ENCODE measurements at regions of chr1 and their contacts with region 1.

Region 1: GRCh38 chr1:98119796-98120195 is 199.0 kb upstream of the DPYD start:
- DNase-seq: no peak
- H3K4me3 ChIP-seq: no peak overlapping the region
- H3K27ac ChIP-seq: no peak overlapping the region
- H3K4me1 ChIP-seq: no peaks in the 10 kb centered on the region
- H3K27me3 ChIP-seq: no peaks in the 10 kb centered on the region
- CTCF ChIP-seq: no peak

Region 2: DNA sequence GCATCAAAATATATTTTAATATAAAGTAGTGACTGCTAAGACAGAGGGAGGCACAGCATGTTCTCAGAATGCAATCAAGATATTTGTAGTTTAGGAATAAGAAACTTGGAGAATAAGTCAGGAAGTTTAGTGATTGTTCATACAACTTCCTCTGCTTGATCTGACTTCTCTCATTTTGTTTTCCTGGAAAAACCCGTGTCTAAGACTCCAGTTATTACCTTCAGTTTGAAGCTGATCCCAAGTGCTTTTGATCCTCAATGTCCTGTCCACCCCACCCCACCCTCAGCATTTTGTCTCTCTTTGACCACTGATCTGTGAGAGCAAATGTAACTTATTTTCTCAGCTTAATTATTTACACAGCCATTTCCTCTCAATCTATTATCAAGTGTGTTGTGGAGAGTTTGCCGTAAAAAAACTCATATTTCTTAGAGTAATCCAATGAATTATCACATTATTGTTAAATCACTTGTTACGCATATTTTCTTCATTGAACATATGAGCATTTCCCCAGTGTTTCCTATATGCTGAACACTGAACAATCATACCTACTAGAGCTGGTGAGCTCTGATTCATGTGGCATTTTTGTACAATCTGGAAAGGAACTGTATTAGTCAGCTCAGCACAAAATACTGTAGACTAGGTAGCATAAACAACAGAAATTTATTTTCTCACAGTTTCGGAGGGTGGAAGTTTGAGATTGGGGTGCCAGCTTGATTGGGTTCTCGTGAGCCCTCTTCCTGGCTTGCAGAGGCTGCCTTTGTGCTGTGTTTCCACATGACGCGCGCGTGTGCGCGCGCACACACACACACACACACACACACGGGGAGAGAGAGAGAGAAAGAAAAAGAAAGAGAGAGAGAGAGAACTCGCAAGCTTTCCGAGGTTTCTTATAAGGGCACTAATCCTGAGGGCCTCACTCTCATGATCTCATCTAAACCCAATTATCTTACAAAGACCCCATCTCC is 133.5 kb before region 1 on chr1:
- intact Hi-C with region 1: no loop called
- DNase-seq: no peak
- H3K4me3 ChIP-seq: no peak overlapping the region
- H3K27ac ChIP-seq: no peak overlapping the region
- H3K4me1 ChIP-seq: no peaks in the 10 kb centered on the region
- H3K27me3 ChIP-seq: no peaks in the 10 kb centered on the region
- CTCF ChIP-seq: no peak

Region 3: GRCh38 chr1:98068016-98068415 is 51.8 kb before region 1 on chr1:
- intact Hi-C with region 1: no loop called
- DNase-seq: no peak
- H3K4me3 ChIP-seq: no peak overlapping the region
- H3K27ac ChIP-seq: no peak overlapping the region
- H3K4me1 ChIP-seq: no peaks in the 10 kb centered on the region
- H3K27me3 ChIP-seq: peaks cover 8% of the 10 kb centered on the region
- CTCF ChIP-seq: no peak

Region 4: GRCh38 chr1:98181036-98181764 is 61.4 kb after region 1 on chr1:
- intact Hi-C with region 1: loop called (anchors 10 kb)
- DNase-seq: no peak
- H3K4me3 ChIP-seq: no peak overlapping the region
- H3K27ac ChIP-seq: no peak overlapping the region
- H3K4me1 ChIP-seq: no peaks in the 10 kb centered on the region
- H3K27me3 ChIP-seq: no peaks in the 10 kb centered on the region
- CTCF ChIP-seq: no peak

Measured in left ventricle myocardium inferior (tissue), 1 donor.